ENCODE measurements at regions of chr2 and their contacts with region 1.

Region 1: DNA sequence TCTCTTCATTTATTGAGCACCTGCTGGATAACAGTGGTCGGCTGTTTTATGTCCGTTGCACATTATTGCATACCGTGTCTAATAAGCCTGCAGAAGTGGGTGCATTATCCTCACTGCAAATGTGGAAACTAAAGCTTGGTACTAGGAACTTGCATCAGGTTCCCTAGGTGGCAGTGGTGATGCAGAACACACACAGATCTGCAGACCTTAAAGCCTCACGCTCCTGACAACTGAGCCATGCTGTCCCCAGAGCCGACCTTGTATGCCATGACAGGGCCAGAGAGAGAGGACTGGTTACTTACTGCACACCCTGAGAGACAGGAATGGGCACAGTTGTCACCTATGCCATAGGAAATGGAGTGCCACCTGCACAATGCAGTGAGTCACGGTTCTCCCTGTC is 151.8 kb downstream of the SH3RF3 start:
- DNase-seq: no peak
- H3K4me3 ChIP-seq: no peak overlapping the region
- H3K27ac ChIP-seq: no peak overlapping the region
- H3K4me1 ChIP-seq: peaks cover 0 to 5% (median 4%) of the 10 kb centered on the region in 4 experiments; a peak in 5 of 7 replicates
- H3K27me3 ChIP-seq: no peaks in the 10 kb centered on the region
- CTCF ChIP-seq: no peak
- EP300 ChIP-seq: no peak
- POLR2A ChIP-seq: no peak
- RAD21 ChIP-seq: peak in 1 of 2 experiments; percentile 39; a peak in 2 of 4 replicates

Region 2: GRCh38 chr2:109295070-109295780 is 14.4 kb after region 1 on chr2:
- CTCF ChIA-PET with region 1: interaction called, 13 read pairs
- POLR2A ChIA-PET with region 1: interaction called, 4 read pairs
- DNase-seq: no peak
- H3K4me3 ChIP-seq: no peak overlapping the region
- H3K27ac ChIP-seq: no peak overlapping the region
- H3K4me1 ChIP-seq: peaks cover 0 to 2% (median 0%) of the 10 kb centered on the region in 4 experiments; a peak in 1 of 7 replicates
- H3K27me3 ChIP-seq: no peaks in the 10 kb centered on the region
- CTCF ChIP-seq: no peak
- EP300 ChIP-seq: no peak
- POLR2A ChIP-seq: no peak
- RAD21 ChIP-seq: no peak

Region 3: GRCh38 chr2:109318150-109318948 is 37.6 kb after region 1 on chr2:
- CTCF ChIA-PET with region 1: no interaction called
- POLR2A ChIA-PET with region 1: no interaction called
- DNase-seq: no peak
- H3K4me3 ChIP-seq: no peak overlapping the region
- H3K27ac ChIP-seq: no peak overlapping the region
- H3K4me1 ChIP-seq: peaks cover 0 to 8% (median 0%) of the 10 kb centered on the region in 4 experiments; a peak in 1 of 7 replicates
- H3K27me3 ChIP-seq: no peaks in the 10 kb centered on the region
- CTCF ChIP-seq: no peak
- EP300 ChIP-seq: no peak
- POLR2A ChIP-seq: no peak
- RAD21 ChIP-seq: no peak

Measured in H1 (cell line).